ENCODE measurements at regions of chr1 and their contacts with region 1.

Region 1: GRCh38 chr1:200510228-200510623 is 100.4 kb upstream of the ZNF281 start:
- DNase-seq: peak; percentile 73 to 87 (median 81)
- H3K4me3 ChIP-seq: no peak overlapping the region
- H3K27ac ChIP-seq: no peak overlapping the region
- H3K4me1 ChIP-seq: no peaks in the 10 kb centered on the region
- H3K27me3 ChIP-seq: peaks cover 0 to 6% (median 0%) of the 10 kb centered on the region in 5 experiments

Region 2: DNA sequence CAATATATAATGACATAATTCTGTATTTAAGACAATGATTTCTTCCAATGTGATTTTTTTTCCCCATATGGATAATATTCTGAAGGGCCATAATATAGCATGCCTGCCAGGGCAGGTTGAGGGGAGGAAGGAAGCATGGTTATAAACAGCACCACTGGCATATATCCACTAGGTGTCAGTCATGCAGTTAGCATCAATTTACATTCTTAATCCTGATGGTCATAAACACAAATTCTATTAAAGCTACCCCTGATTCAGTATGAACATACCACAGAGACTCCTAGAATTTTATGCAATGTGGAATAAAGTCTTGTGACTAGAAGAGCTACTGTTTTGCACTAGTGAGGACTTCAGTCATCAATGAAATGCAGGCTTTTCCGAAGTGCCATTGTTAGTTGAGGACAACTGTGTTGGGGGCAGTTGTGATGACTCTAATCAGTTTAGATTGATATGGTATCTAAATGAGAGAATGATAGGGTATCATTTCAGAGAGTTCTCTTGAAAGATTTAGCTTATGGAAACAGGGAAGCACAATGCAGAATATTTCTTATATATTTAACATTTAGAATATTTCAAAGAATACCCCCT is 825.4 kb before region 1 on chr1:
- CTCF ChIA-PET with region 1: interaction called, 14 read pairs
- POLR2A ChIA-PET with region 1: no interaction called
- DNase-seq: peak; percentile 63 to 80 (median 75)
- H3K4me3 ChIP-seq: no peak overlapping the region
- H3K27ac ChIP-seq: no peak overlapping the region
- H3K4me1 ChIP-seq: peaks cover 0 to 16% (median 0%) of the 10 kb centered on the region in 4 experiments
- H3K27me3 ChIP-seq: no peaks in the 10 kb centered on the region

Region 3: DNA sequence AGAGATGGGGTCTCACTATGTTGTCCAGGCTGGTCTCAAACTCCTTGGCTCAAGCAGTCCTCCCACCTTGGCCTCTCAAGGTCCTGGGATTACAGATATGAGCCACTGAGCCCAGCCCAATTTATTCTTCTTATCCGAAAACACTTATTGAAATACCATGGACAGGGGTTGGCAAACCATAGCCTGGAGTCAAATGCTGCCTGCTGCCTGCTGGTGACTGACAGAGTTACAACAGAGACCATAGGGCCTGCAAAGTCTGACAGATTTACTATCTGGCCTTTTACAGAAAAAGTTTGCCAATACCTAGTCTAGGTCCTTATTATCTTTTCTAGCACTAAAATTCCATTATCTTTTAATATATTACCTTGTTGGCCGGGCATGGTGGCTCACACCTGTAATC is 13.3 kb before region 1 on chr1:
- CTCF ChIA-PET with region 1: interaction called, 48 read pairs
- POLR2A ChIA-PET with region 1: no interaction called
- DNase-seq: no peak
- H3K4me3 ChIP-seq: no peak overlapping the region
- H3K27ac ChIP-seq: no peak overlapping the region
- H3K4me1 ChIP-seq: no peaks in the 10 kb centered on the region
- H3K27me3 ChIP-seq: no peaks in the 10 kb centered on the region

Measured in common myeloid progenitor, CD34-positive (primary cell).